ENCODE measurements at regions of chr5 and their contacts with region 1.

Region 1: GRCh38 chr5:90461292-90461691 is 13.3 kb downstream of the MBLAC2 start:
- DNase-seq: no peak
- CTCF ChIP-seq: no peak

Region 2: GRCh38 chr5:90473481-90474234 is 12.4 kb after region 1 on chr5:
- CTCF ChIA-PET with region 1: interaction called, 19 read pairs
- POLR2A ChIA-PET with region 1: no interaction called
- DNase-seq: peak; percentile 12
- CTCF ChIP-seq: no peak

Region 3: GRCh38 chr5:90484540-90484939 is 23.2 kb after region 1 on chr5:
- CTCF ChIA-PET with region 1: no interaction called
- POLR2A ChIA-PET with region 1: no interaction called
- DNase-seq: no peak
- CTCF ChIP-seq: no peak

Region 4: GRCh38 chr5:90709323-90710155 is 248.2 kb after region 1 on chr5:
- CTCF ChIA-PET with region 1: no interaction called
- POLR2A ChIA-PET with region 1: no interaction called
- DNase-seq: peak; percentile 35
- CTCF ChIP-seq: peak; percentile 65

Region 5: GRCh38 chr5:91656891-91657290 is 1195.6 kb after region 1 on chr5:
- CTCF ChIA-PET with region 1: no interaction called
- POLR2A ChIA-PET with region 1: no interaction called
- DNase-seq: no peak
- CTCF ChIP-seq: no peak

Measured in GM10248 (cell line).